Breast epithelium (tissue), 4 donors: ENCODE measurements at regions of chr18 and their contacts with region 1.

Region 1: GRCh38 chr18:79774111-79774510 is 23.6 kb upstream of the KCNG2 start:
- DNase-seq: peak in 1 of 2 donors; percentile 44
- H3K4me3 ChIP-seq: no peak overlapping the region
- H3K27ac ChIP-seq: no peak overlapping the region
- H3K4me1 ChIP-seq: no peaks in the 10 kb centered on the region
- H3K27me3 ChIP-seq: peaks cover 0 to 57% of the 10 kb centered on the region in 2 donors
- CTCF ChIP-seq: no peak
- POLR2A ChIP-seq: no peak

Region 2: GRCh38 chr18:79747156-79747845 is 26.8 kb before region 1 on chr18:
- intact Hi-C with region 1: loop called (anchors 1 kb)
- DNase-seq: peak in 1 of 2 donors; percentile 49
- H3K4me3 ChIP-seq: no peak overlapping the region
- H3K27ac ChIP-seq: no peak overlapping the region
- H3K4me1 ChIP-seq: no peaks in the 10 kb centered on the region
- H3K27me3 ChIP-seq: no peaks in the 10 kb centered on the region
- CTCF ChIP-seq: no peak
- POLR2A ChIP-seq: no peak